ENCODE measurements at regions of chrX and their contacts with region 1.

Region 1: GRCh38 chrX:130268500-130269170 is at the start of gene ZNF280C:
- DNase-seq: peak; percentile 86
- H3K4me3 Mint-ChIP-seq: peak within 1 kb of the TSS; percentile 82
- H3K27ac Mint-ChIP-seq: peak within 1 kb of the TSS; percentile 79
- H3K4me1 Mint-ChIP-seq: no peaks in the 10 kb centered on the region
- H3K27me3 Mint-ChIP-seq: peaks cover 13% of the 10 kb centered on the region
- CTCF ChIP-seq: no peak
- total RNA-seq, gene ZNF280C: 5.5 and 6.6 TPM in 2 replicates

Region 2: DNA sequence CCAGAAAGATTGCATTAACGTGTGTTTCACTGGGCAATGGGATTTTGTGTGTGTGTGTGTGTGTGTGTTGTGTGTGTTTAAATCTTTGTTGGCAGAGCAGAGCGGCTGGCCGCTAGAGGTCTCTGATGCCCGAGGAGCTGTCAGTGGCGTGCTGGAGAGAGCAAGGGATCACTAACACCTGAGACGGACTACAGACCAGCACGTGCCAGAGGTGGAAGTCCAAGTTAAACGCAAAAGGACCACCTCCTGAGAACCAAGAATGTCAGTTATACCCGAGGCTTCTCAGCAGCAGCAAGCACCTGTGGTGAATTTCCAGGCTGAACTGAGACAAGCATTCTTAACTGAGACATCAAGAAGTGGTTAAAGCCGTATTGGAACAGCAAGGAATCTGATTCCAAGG is 62.1 kb after region 1 on chrX:
- CTCF ChIA-PET with region 1: no interaction called
- POLR2A ChIA-PET with region 1: no interaction called
- intact Hi-C with region 1: loop called (anchors 5 kb)
- DNase-seq: peak; percentile 66
- H3K4me3 Mint-ChIP-seq: no peak overlapping the region
- H3K27ac Mint-ChIP-seq: no peak overlapping the region
- H3K4me1 Mint-ChIP-seq: no peaks in the 10 kb centered on the region
- H3K27me3 Mint-ChIP-seq: peaks cover 49% of the 10 kb centered on the region
- CTCF ChIP-seq: peak; percentile 51